Head of caudate nucleus (tissue), 42 donors: ENCODE measurements at regions of chr14 and their contacts with region 1.

Region 1: DNA sequence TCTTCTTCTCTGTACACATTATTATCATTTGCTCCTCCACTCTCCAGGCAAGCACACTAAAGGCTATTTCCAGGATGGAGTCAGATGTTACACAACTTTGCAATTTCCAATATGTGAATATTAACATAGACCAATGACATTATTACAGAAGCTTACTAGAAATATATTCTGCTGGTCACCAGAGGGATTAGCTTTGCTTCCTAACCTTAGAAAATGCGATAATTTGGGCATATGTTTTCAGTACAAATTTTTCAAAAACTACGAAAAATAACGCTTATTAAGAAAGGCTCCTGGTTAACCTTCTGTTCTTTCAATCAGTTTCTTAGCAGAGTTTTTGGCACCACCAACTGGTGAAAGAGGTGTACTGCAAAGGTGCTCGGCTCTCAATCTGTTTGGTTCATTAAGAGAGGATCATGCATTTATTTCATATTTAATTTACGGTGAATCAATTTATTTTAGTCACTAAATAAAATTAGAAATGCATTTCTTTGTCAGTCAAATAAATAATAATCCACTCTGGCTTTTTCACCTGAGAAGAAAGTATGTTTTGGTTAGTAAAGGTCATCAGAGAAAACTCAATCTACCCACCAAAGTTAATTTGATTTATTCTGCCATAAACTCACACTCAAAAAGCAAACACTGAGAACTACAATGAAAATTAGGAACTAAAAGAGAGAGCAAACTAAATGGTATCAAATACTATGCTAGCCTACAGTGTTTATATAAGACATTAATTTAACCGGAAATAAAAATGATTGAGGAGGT is 39.2 kb downstream of the EFCAB11 start:
- DNase-seq: peak in 41 of 42 donors; percentile 13 to 92 (median 74)

Region 2: DNA sequence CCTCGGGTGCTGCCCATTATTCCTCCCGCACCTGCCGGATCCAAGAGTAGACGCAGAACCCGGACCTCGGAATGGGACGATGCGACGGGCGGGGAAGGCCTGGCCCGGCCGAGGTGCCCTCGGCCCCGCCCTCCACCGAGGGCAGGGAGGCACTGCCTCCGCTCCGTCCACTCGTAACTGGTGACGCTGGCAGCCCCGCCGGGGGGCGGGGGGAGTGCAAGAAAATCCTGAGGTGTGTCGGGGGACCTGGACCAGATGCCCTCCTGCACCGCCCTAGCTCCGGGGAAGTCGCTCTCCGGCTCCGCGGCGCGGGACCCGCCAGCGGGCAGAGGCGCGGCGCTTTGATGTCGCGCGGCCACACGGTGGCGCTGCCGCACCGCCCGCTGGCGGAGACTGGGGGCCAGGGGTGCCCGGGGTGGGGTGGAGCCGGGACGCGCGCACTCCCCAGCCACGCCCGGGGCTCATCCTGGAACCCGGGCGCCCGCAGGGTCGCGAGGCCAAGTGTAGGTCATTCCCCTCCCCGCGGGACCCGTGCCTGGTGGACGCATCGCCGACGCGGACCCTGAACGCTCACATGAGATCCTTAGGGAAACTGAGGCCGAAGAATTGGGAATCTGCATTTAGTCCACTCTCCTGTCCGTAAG is 888.1 kb before region 1 on chr14:
- intact Hi-C with region 1: loop called (anchors 5 kb)
- DNase-seq: peak in 39 of 42 donors; percentile 20 to 82 (median 62)

Region 3: GRCh38 chr14:89240414-89240813 is 674.9 kb before region 1 on chr14:
- intact Hi-C with region 1: loop called (anchors 10 kb)
- DNase-seq: no peak

Region 4: DNA sequence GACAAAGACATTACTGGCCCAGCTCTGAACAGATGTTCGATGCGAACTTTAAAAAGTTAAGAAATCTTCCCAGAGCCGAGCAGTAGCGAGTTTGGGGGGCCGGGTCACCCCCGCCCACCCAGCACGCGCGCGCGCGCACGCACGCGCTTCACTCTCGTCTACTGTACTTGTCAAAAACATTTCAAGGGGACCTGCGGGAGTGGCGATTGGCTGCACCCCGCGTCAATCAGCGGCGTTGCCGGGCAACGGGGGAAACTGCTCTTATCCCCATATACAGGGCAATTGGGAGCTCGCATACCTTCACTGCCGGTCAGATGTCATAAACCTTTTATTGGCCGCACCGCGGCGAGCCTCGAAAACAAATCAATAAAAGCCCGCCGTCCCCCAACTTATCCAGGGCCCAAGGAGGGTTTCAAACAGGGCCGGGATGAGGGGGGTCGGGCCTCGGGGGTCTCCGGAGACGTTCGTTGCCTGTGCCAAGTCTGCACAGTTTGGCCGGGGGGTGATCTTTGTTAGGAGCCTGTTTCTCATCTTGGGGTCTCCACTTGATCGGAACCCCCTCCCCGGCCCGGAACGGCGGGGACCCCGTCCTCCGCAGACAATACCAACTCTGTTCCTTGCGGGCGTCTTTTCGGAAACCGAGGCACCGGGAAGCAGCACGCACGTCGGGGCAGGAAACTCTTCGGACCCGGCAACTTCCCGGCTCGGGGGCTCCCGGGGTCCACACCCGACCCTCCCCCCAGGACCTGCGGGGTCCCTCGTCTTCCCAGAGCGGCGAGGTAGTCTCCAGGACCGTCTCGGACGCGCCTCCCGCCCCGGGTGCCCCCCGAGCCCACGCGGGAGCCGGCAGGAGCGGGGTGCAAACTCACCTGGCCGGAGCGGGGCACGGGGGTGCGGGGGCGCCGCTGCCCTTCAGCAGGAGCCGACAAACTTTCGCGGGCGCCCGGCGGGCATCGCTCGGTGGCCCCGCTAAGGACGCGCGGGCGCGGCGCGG is 499.0 kb before region 1 on chr14:
- intact Hi-C with region 1: loop called (anchors 10 kb)
- DNase-seq: peak; percentile 91 to 100 (median 99)